ENCODE measurements at regions of chr10 and their contacts with region 1.

Region 1: GRCh38 chr10:99630439-99630838 is 10.2 kb upstream of the SLC25A28 start:
- DNase-seq: peak in 1 of 4 donors; percentile 15
- ATAC-seq: peak; percentile 64
- H3K4me3 ChIP-seq: no peak overlapping the region
- H3K27ac ChIP-seq: no peak overlapping the region
- H3K4me1 ChIP-seq: no peaks in the 10 kb centered on the region
- H3K27me3 ChIP-seq: no peaks in the 10 kb centered on the region
- CTCF ChIP-seq: no peak

Region 2: DNA sequence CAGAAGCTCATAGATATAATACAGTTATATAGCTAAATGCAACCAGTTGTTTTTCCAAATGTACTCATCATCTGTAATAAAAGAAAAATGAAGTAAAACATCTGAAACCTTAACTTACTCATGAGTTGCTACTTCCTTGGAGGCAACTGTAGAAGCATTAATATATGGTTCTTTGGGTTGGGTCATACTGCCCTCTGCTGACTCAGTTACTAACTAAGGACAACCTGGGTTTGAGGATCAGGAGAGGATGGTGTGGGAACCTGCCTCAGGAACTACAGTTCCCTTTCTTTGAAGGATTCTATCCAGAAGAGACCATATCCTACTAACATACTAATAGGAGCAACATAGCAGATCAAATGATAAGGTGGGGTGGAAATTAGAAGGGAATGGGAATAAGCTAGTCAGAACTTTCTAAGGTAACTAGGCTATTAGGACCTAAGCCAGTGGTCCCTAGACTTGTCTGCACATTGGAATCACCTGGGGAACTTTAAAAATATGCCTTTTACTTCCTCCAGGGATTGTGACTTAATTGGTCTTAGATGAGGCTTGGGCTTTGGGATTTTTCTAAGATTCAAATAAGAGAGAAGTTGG is 80.8 kb after region 1 on chr10:
- intact Hi-C with region 1: loop called in 1 of 2 experiments (anchors 10 kb)
- DNase-seq: peak in 2 of 4 donors; percentile 17 to 52
- ATAC-seq: peak; percentile 90
- H3K4me3 ChIP-seq: no peak overlapping the region
- H3K27ac ChIP-seq: no peak overlapping the region
- H3K4me1 ChIP-seq: no peaks in the 10 kb centered on the region
- H3K27me3 ChIP-seq: no peaks in the 10 kb centered on the region
- CTCF ChIP-seq: peak in 1 of 2 donors; percentile 38

Region 3: GRCh38 chr10:99788598-99789256 is 158.3 kb after region 1 on chr10:
- intact Hi-C with region 1: no loop called
- DNase-seq: peak in 1 of 4 donors; percentile 17
- ATAC-seq: peak; percentile 72
- H3K4me3 ChIP-seq: no peak overlapping the region
- H3K27ac ChIP-seq: peak overlapping the region in 1 of 2 donors; percentile 8
- H3K4me1 ChIP-seq: no peaks in the 10 kb centered on the region
- H3K27me3 ChIP-seq: no peaks in the 10 kb centered on the region
- CTCF ChIP-seq: no peak

Measured in left lung (tissue), 14 donors.